ENCODE measurements at regions of chr18 and their contacts with region 1.

Region 1: DNA sequence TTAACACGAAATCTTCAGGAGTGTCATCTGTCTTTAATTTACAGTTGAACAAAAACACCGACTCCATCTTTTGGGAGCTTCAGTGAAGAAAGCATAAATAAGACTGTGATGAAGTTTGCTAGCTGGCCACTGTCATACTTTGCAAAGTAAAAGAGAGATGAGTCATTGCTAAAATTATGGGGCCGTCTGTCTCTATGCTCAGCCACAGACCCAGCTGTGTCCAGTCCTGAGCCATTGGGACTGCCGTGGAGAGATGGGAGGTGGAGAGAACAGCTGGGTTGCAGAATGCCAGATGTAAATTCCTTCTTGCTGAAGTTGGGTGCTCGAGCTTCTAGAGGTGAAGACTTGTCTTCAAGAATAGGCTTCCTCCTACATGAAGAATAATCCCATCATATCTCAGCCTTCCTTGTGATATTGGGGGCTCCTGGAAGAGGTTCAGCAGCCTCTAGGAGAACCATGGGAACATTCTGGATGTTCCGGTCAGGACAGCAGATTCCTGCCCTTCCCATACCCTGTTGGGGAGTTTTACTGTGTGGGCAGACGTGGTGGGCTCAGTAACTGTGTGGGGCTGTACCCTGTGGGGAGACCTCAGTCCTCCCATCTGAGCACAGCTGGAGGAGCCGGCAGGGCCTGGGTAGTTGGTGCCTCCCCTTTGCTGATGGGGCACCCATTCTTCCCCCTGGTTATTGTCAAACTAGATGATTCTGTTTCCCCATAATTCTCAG is 71.1 kb downstream of the LDLRAD4 start:
- DNase-seq: no peak
- H3K4me3 Mint-ChIP-seq: no peak overlapping the region
- H3K27ac Mint-ChIP-seq: peak overlapping the region; percentile 83
- H3K4me1 Mint-ChIP-seq: peaks cover 39% of the 10 kb centered on the region
- H3K27me3 Mint-ChIP-seq: no peaks in the 10 kb centered on the region

Region 2: GRCh38 chr18:13221869-13222855 is 67.5 kb before region 1 on chr18:
- intact Hi-C with region 1: loop called (anchors 1 kb)
- DNase-seq: no peak
- H3K4me3 Mint-ChIP-seq: no peak overlapping the region
- H3K27ac Mint-ChIP-seq: no peak overlapping the region
- H3K4me1 Mint-ChIP-seq: peaks cover 29% of the 10 kb centered on the region
- H3K27me3 Mint-ChIP-seq: peaks cover 15% of the 10 kb centered on the region

Region 3: DNA sequence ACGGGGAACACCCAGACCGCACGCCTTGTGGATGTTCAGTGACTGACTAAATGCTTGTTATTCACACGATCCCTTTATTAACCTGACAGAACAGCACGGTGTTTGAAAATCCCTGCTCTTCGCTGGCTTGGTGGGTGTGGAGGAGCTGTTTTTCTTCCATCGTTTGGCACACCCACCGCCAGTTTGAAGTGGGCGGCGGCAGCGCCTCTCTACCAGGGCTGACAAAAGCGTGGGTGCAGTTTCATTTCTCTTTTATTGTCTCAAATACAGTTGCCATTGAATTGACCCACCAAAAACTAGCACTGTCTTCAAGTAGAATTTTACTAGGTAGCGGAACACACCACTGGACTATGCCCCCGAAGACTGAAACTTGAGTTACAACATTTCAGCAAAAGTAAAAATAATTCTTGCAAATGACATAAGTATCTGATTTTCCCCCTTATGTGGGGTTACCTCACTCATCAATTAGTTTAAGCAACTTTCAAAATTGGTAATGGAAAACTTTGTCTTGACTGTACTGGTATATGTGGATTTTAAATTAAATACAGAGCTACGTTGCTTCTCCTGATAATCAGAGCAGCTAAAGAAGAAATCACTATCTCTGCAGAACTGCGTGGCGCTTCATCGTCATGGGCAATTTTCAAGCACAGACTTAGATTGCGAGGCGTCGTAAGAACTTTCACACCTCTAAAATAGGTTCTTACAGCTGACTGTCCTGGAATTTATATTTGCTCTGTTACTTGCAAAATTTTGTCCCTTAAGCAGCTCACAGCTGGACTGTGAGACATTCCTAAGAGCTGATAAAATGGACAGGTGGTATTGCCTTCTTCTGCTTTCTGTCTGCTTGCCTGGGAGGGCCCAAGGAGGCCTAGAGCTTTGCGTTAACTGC is 10.2 kb before region 1 on chr18:
- intact Hi-C with region 1: loop called (anchors 1 kb)
- DNase-seq: peak; percentile 72
- H3K4me3 Mint-ChIP-seq: peak overlapping the region; percentile 75
- H3K27ac Mint-ChIP-seq: peak overlapping the region; percentile 79
- H3K4me1 Mint-ChIP-seq: peaks cover 59% of the 10 kb centered on the region
- H3K27me3 Mint-ChIP-seq: no peaks in the 10 kb centered on the region

Measured in activated CD4-positive, alpha-beta T cell treated with anti-CD3 and anti-CD28 coated beads, Interleukin-2, amount 10 ng/mL, durations not matched to agents 24 days and 14 days (primary cell).